ENCODE measurements at regions of chr3 and their contacts with region 1.

Region 1: GRCh38 chr3:20039766-20040475 is at the start of gene KAT2B:
- DNase-seq: peak; percentile 93
- H3K4me3 ChIP-seq: peak within 1 kb of the TSS; percentile 94
- H3K27ac ChIP-seq: peak within 1 kb of the TSS; percentile 93
- H3K4me1 ChIP-seq: peaks cover 51% of the 10 kb centered on the region
- CTCF ChIP-seq: peak; percentile 78
- total RNA-seq, gene KAT2B: 19.2 and 24.2 TPM in 2 replicates

Region 2: GRCh38 chr3:18740631-18741583 is 1299.0 kb before region 1 on chr3:
- CTCF ChIA-PET with region 1: no interaction called
- POLR2A ChIA-PET with region 1: no interaction called
- intact Hi-C with region 1: loop called (anchors 10 kb)
- DNase-seq: peak; percentile 76
- H3K4me3 ChIP-seq: peak overlapping the region; percentile 60
- H3K27ac ChIP-seq: peak overlapping the region; percentile 91
- H3K4me1 ChIP-seq: peaks cover 73% of the 10 kb centered on the region
- CTCF ChIP-seq: no peak

Region 3: GRCh38 chr3:19931180-19931692 is 108.7 kb before region 1 on chr3:
- CTCF ChIA-PET with region 1: no interaction called
- POLR2A ChIA-PET with region 1: no interaction called
- intact Hi-C with region 1: no loop called
- DNase-seq: no peak
- H3K4me3 ChIP-seq: no peak overlapping the region
- H3K27ac ChIP-seq: no peak overlapping the region
- H3K4me1 ChIP-seq: no peaks in the 10 kb centered on the region
- CTCF ChIP-seq: no peak

Region 4: GRCh38 chr3:19946832-19947548 is 92.9 kb before region 1 on chr3 and contains the start of gene RAB5A:
- CTCF ChIA-PET with region 1: no interaction called
- POLR2A ChIA-PET with region 1: interaction called, 4 read pairs
- intact Hi-C with region 1: loop called (anchors 1 kb)
- DNase-seq: peak; percentile 97
- H3K4me3 ChIP-seq: peak within 1 kb of the TSS; percentile 91
- H3K27ac ChIP-seq: peak within 1 kb of the TSS; percentile 73
- H3K4me1 ChIP-seq: peaks cover 30% of the 10 kb centered on the region
- CTCF ChIP-seq: no peak
- total RNA-seq, gene RAB5A: 24.5 and 26.1 TPM in 2 replicates

Region 5: GRCh38 chr3:20125897-20126296 is 86.0 kb after region 1 on chr3:
- CTCF ChIA-PET with region 1: no interaction called
- POLR2A ChIA-PET with region 1: interaction called, 3 read pairs
- intact Hi-C with region 1: loop called (anchors 2 kb)
- DNase-seq: peak; percentile 87
- H3K4me3 ChIP-seq: peak overlapping the region; percentile 52
- H3K27ac ChIP-seq: peak overlapping the region; percentile 80
- H3K4me1 ChIP-seq: peaks cover 21% of the 10 kb centered on the region
- CTCF ChIP-seq: no peak